Activated CD4-positive, alpha-beta memory T cell treated with anti-CD3 and anti-CD28 coated beads, Interleukin-2, amount 10 ng/mL, durations not matched to agents 7 days and 5 days (primary cell): ENCODE measurements at regions of chr19 and their contacts with region 1.

Region 1: GRCh38 chr19:18919086-18919899 is at the starts of genes COPE and DDX49:
- DNase-seq: peak; percentile 99
- H3K4me3 Mint-ChIP-seq: peak within 1 kb of the TSS; percentile 97
- H3K27ac Mint-ChIP-seq: peak within 1 kb of the TSS; percentile 88
- H3K4me1 Mint-ChIP-seq: peaks cover 46% of the 10 kb centered on the region
- H3K27me3 Mint-ChIP-seq: no peaks in the 10 kb centered on the region
- total RNA-seq, gene COPE: 274 to 278 TPM
- total RNA-seq, gene DDX49: 34.0 to 36.2 TPM

Region 2: GRCh38 chr19:18931316-18932162 is 12.2 kb after region 1 on chr19:
- CTCF ChIA-PET with region 1: no interaction called
- POLR2A ChIA-PET with region 1: interaction called, 32 read pairs
- DNase-seq: no peak
- H3K4me3 Mint-ChIP-seq: no peak overlapping the region
- H3K27ac Mint-ChIP-seq: no peak overlapping the region
- H3K4me1 Mint-ChIP-seq: peaks cover 6% of the 10 kb centered on the region
- H3K27me3 Mint-ChIP-seq: peaks cover 8% of the 10 kb centered on the region

Region 3: DNA sequence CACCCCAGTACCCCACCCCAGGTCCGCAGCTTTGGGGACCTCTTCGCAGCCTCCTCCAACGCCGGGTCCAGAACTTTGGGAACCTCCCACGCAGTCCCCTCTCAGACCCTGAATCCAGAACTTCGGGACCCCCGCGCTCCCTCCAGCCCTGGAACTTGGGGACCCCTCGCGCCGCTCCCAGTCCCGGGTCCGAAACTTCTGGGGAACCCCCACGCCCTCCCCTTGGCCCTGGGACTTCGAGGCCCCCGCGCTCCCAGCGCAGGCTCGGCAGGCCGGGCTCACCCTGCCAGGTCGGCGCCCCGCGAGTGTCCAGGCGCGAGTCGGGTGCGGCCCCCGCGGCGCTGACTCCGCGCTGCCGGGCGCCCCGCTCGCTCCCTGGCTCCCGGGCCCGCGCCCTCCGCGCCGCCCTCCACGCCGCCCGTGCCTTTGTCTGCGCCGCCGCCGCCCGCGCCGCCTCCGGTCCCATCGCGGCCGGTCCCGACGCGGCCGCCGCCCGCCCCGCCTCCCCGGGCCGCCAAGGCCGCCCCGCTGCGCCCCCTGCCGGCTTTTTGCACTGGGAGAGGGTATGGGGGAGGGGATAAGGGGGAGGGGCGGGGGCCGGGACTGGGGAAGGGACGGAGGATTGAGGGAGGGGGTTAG is 21.6 kb after region 1 on chr19 and contains the start of gene HOMER3:
- CTCF ChIA-PET with region 1: interaction called, 15 read pairs
- POLR2A ChIA-PET with region 1: interaction called, 6 read pairs
- DNase-seq: peak; percentile 75
- H3K4me3 Mint-ChIP-seq: no peak within 1 kb of the TSS
- H3K27ac Mint-ChIP-seq: no peak within 1 kb of the TSS
- H3K4me1 Mint-ChIP-seq: peaks cover 7% of the 10 kb centered on the region
- H3K27me3 Mint-ChIP-seq: peaks cover 37% of the 10 kb centered on the region
- total RNA-seq, gene HOMER3: not detected